T-cell (primary cell): ENCODE measurements at regions of chr17 and their contacts with region 1.

Region 1: GRCh38 chr17:42880776-42881310 is 19.8 kb upstream of the G6PC1 start:
- DNase-seq: no peak
- ATAC-seq: no peak
- H3K4me3 ChIP-seq: no peak overlapping the region
- H3K4me3 Mint-ChIP-seq: no peak overlapping the region
- H3K27ac ChIP-seq: no peak overlapping the region
- H3K27ac Mint-ChIP-seq: no peak overlapping the region
- H3K4me1 ChIP-seq: no peaks in the 10 kb centered on the region
- H3K4me1 Mint-ChIP-seq: no peaks in the 10 kb centered on the region
- H3K27me3 ChIP-seq: peaks cover 0 to 31% of the 10 kb centered on the region in 2 experiments
- H3K27me3 Mint-ChIP-seq: peaks cover 12 to 21% of the 10 kb centered on the region in 2 donors

Region 2: GRCh38 chr17:42848093-42848492 is 32.8 kb before region 1 on chr17:
- CTCF ChIA-PET with region 1: interaction called in 1 of 2 experiments, 13 read pairs
- POLR2A ChIA-PET with region 1: no interaction called
- DNase-seq: no peak
- ATAC-seq: no peak
- H3K4me3 ChIP-seq: no peak overlapping the region
- H3K4me3 Mint-ChIP-seq: no peak overlapping the region
- H3K27ac ChIP-seq: no peak overlapping the region
- H3K27ac Mint-ChIP-seq: no peak overlapping the region
- H3K4me1 ChIP-seq: no peaks in the 10 kb centered on the region
- H3K4me1 Mint-ChIP-seq: peaks cover 0 to 8% (median 6%) of the 10 kb centered on the region in 3 donors
- H3K27me3 ChIP-seq: peaks cover 0 to 7% of the 10 kb centered on the region in 2 experiments
- H3K27me3 Mint-ChIP-seq: peaks cover 0 to 2% of the 10 kb centered on the region in 2 donors